Activated CD8-positive, alpha-beta memory T cell treated with anti-CD3 and anti-CD28 coated beads, Interleukin-2, amount 10 ng/mL, durations not matched to agents 7 days and 5 days (primary cell): ENCODE measurements at regions of chr12 and their contacts with region 1.

Region 1: DNA sequence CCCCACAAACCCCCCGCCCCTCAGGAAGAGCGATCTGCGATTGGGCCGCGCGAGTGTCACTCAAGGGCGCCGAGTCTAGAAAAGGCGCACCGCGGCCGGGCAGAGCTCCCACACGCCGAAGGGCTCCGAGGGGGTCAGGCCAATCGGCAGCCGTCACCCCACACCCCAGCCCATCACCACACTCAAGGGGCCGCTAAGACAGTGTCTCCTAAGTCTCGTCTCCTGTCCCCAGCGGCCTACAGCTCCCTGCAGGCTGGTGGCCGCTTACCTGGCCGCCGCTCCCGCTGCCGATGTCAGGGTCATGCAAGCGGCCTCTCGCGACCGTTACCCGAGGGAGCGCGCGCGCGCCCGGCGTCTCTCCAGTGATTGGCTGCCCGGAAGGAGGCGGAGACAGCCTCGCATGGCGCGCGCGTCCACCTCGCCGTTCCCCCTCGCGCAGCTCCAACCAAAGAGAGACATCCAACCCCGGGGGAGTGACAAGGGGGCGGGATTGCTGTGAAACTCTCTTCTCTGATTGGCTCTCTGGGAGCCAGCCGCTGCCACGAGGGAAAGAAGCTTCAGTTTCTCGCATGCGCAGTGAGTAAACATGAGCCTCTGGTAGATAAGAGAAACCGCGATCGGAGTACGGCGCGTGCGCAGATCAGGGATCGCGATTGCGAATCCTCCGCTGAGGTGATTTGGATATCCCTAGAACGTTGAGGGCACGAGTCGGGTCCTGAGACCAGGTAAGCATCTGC is at the starts of genes MPHOSPH9 and MTRFR:
- DNase-seq: peak; percentile 100
- ATAC-seq: peak; percentile 91
- H3K4me3 Mint-ChIP-seq: peak within 1 kb of the TSS; percentile 98
- H3K27ac Mint-ChIP-seq: peak within 1 kb of the TSS; percentile 98
- H3K4me1 Mint-ChIP-seq: peaks cover 62% of the 10 kb centered on the region
- H3K27me3 Mint-ChIP-seq: no peaks in the 10 kb centered on the region
- total RNA-seq, gene MPHOSPH9: 129 to 186 TPM
- total RNA-seq, gene MTRFR: 29.5 to 31.7 TPM

Region 2: GRCh38 chr12:122980183-122981046 is 252.6 kb before region 1 on chr12 and contains the start of gene ARL6IP4:
- CTCF ChIA-PET with region 1: interaction called, 12 read pairs
- DNase-seq: peak; percentile 78
- ATAC-seq: peak; percentile 82
- H3K4me3 Mint-ChIP-seq: peak within 1 kb of the TSS; percentile 91
- H3K27ac Mint-ChIP-seq: peak within 1 kb of the TSS; percentile 86
- H3K4me1 Mint-ChIP-seq: peaks cover 64% of the 10 kb centered on the region
- H3K27me3 Mint-ChIP-seq: no peaks in the 10 kb centered on the region
- total RNA-seq, gene ARL6IP4: 169 to 216 TPM

Region 3: DNA sequence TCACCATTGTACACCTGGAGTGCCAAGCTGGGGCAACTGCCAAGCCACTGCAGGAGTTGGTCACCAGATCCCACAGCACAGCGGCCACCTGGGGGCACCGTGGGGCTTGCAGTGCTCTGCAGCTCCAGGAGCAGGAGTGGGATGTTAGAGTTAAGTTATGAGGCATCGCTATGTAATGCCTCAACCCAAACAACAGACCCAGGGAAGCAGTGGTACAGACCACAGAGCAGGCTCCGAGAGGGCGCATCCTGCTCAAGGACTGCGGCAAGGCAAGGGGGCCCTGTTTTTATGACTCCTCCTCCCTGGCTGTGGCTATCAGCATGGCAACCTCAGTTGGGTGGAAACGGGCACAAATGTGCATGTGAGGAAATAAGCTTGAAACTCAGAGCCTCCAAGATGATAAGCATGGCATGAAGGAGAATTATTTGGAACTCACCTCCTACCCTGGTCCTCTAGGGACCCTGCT is 189.4 kb before region 1 on chr12:
- CTCF ChIA-PET with region 1: interaction called, 55 read pairs
- DNase-seq: peak; percentile 89
- ATAC-seq: peak; percentile 91
- H3K4me3 Mint-ChIP-seq: no peak overlapping the region
- H3K27ac Mint-ChIP-seq: peak overlapping the region; percentile 54
- H3K4me1 Mint-ChIP-seq: peaks cover 14% of the 10 kb centered on the region
- H3K27me3 Mint-ChIP-seq: peaks cover 3% of the 10 kb centered on the region

Region 4: DNA sequence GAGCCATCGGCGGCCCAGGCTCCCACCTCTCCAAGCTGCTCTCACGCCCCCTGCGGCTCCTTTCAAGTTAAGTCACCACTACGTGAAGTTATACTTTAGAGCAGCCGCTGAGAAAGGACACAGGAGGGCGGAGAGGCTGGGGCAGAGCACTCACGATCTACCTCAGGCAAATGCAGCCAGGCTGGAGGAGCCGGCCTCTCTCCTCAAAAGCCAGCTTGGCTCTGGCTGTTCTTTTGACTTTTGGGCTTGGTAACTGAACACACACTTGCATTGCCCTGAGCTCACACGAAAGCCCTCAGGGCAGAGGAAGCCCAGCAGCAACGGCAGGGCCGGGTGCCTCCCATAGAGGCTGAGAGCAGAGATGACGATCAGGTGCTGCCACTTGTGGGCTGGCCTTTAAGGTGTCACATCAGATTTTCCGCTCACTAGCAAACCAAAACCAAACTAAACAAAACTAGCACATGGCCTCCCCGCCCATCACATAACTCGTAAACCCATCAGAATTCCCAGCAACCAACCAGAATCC is 157.3 kb before region 1 on chr12:
- CTCF ChIA-PET with region 1: interaction called, 10 read pairs
- DNase-seq: peak; percentile 91
- ATAC-seq: peak; percentile 87
- H3K4me3 Mint-ChIP-seq: peak overlapping the region; percentile 64
- H3K27ac Mint-ChIP-seq: peak overlapping the region; percentile 90
- H3K4me1 Mint-ChIP-seq: peaks cover 39% of the 10 kb centered on the region
- H3K27me3 Mint-ChIP-seq: peaks cover 2% of the 10 kb centered on the region

Region 5: GRCh38 chr12:123139926-123140675 is 92.9 kb before region 1 on chr12:
- CTCF ChIA-PET with region 1: no interaction called
- DNase-seq: no peak
- ATAC-seq: no peak
- H3K4me3 Mint-ChIP-seq: no peak overlapping the region
- H3K27ac Mint-ChIP-seq: no peak overlapping the region
- H3K4me1 Mint-ChIP-seq: peaks cover 5% of the 10 kb centered on the region
- H3K27me3 Mint-ChIP-seq: no peaks in the 10 kb centered on the region

Region 6: DNA sequence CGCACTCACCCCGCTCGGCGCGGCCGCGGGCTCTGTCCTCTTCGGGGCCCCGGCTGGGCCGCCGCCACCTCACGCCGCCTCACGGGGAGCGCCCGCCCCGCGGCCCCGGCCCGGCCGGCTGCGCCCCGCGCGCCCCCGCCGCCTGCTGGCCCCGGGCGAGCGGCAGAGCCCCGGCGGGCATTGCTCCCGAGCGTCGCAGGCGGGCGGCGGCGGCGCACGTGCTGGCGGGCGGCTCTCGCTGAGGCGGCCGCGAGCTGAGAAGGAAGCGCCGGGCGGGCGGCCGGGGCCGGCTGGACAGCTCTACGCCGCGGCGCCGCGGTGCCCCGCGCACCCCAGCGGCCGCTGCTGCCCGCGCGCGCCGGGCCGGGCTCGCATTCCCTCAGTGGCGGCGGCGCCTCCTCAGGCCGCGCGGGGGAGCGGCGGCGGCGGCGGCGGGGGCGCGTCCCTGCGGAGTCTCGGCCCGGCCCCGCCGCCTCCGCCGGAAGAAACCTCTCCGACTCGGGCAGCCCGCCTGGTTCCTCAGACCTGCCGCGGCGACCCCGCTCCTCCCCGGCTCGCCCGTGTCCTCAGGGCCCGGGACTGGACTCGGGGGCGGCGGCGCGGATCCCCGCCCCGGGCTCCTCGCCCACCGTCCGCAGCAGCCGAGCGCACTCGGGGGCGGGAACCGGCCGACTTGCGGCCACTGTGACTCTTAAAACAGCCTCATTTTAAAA is 82.1 kb before region 1 on chr12 and contains the start of gene PITPNM2:
- CTCF ChIA-PET with region 1: interaction called, 12 read pairs
- DNase-seq: peak; percentile 65
- ATAC-seq: peak; percentile 88
- H3K4me3 Mint-ChIP-seq: peak within 1 kb of the TSS; percentile 65
- H3K27ac Mint-ChIP-seq: peak within 1 kb of the TSS; percentile 40
- H3K4me1 Mint-ChIP-seq: peaks cover 14% of the 10 kb centered on the region
- H3K27me3 Mint-ChIP-seq: peaks cover 19% of the 10 kb centered on the region
- total RNA-seq, gene PITPNM2: 8.6 to 11.6 TPM

Region 7: GRCh38 chr12:123250484-123251383 is 17.8 kb after region 1 on chr12:
- CTCF ChIA-PET with region 1: interaction called, 17 read pairs
- DNase-seq: no peak
- ATAC-seq: no peak
- H3K4me3 Mint-ChIP-seq: no peak overlapping the region
- H3K27ac Mint-ChIP-seq: peak overlapping the region; percentile 52
- H3K4me1 Mint-ChIP-seq: peaks cover 29% of the 10 kb centered on the region
- H3K27me3 Mint-ChIP-seq: no peaks in the 10 kb centered on the region